HEK293 (cell line): ENCODE measurements at regions of chr4 and their contacts with region 1.

Region 1: DNA sequence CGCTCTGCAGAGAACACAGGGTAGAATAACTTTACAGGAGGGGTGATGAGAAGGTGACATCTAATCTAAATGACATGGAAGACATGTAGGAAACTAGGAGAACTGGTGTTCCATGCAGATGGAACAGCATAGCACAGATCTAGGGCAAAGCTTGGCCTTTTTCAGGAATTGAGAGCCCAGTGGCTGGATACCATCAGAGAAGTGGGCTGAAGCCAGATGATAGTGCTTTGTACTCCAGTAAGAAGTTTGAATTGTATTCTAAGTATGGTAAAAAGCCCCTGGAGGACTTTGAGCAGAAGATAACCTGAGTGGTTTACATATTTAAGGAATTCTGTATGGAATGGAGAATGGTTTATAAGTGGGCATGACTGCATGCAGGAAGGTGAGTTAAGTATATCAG is 32.8 kb downstream of the ENOPH1 start:
- H3K4me3 ChIP-seq: no peak overlapping the region
- H3K27ac ChIP-seq: no peak overlapping the region
- H3K4me1 ChIP-seq: no peaks in the 10 kb centered on the region
- CTCF ChIP-seq: no peak

Region 2: GRCh38 chr4:82739316-82740179 is 276.3 kb after region 1 on chr4:
- CTCF ChIA-PET with region 1: interaction called, 13 read pairs
- POLR2A ChIA-PET with region 1: no interaction called
- H3K4me3 ChIP-seq: no peak overlapping the region
- H3K27ac ChIP-seq: no peak overlapping the region
- H3K4me1 ChIP-seq: peaks cover under 1% of the 10 kb centered on the region; the same call in 1 of the 2 replicates
- CTCF ChIP-seq: peak; percentile 66